Motor neuron (in vitro differentiated cells): ENCODE measurements at regions of chr6 and their contacts with region 1.

Region 1: GRCh38 chr6:70107852-70108629 is 194.8 kb downstream of the COL9A1 start:
- ATAC-seq: peak in 2 of 8 experiments; percentile 28 to 39
- H3K4me3 ChIP-seq: no peak overlapping the region
- H3K27ac ChIP-seq: no peak overlapping the region
- H3K4me1 ChIP-seq: peaks cover 0 to 21% of the 10 kb centered on the region in 2 donors

Region 2: GRCh38 chr6:68634726-68635411 is 1473.2 kb before region 1 on chr6 and contains the start of gene ADGRB3:
- in situ Hi-C with region 1: loop called in 3 of 9 experiments (anchors 25 kb)
- ATAC-seq: peak; percentile 83 to 92 (median 90)
- H3K4me3 ChIP-seq: peak within 1 kb of the TSS; percentile 46 to 63 (median 56)
- H3K27ac ChIP-seq: peak within 1 kb of the TSS; percentile 76 to 79
- H3K4me1 ChIP-seq: peaks cover 8 to 20% of the 10 kb centered on the region in 2 donors
- total RNA-seq, gene ADGRB3: 0.05 to 48.0 (median 24.2) TPM

Region 3: GRCh38 chr6:69732640-69733039 is 375.4 kb before region 1 on chr6:
- in situ Hi-C with region 1: loop called in 2 of 9 experiments (anchors 25 kb)
- ATAC-seq: no peak
- H3K4me3 ChIP-seq: no peak overlapping the region
- H3K27ac ChIP-seq: no peak overlapping the region
- H3K4me1 ChIP-seq: no peaks in the 10 kb centered on the region

Region 4: DNA sequence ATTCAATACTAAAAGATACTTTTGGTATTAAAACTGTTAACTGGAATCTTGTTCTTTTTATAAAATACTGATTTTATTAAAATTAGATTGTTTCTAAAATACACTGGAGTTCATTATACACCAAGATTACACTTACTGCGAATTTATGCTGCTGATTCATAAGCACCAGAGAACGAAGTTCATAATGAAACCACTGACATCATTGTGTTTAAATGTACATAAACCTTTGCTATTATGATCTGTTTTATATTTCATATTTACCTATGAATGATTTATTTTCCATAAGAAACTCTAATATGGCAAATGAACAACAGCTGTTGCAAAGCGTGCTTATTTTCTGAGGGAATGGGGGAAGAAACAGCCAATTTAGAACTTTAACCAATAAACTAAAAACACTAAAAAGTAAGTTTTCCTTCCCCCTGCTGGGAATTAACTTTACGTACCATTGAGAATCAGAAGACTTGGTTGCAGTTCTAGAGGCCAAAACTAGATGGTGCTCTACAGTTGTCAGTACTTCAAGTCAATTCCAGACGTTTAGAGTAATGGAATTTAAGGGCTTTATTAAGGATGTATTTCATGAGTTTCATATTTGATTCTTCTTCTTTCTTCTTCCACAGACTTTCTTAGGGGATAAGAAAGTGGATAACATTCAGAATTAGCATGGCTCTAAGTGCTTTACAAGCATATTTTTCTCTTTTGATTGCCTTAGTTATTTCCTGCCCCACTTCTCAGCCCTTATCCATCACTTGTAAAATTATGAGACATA is 272.4 kb before region 1 on chr6:
- in situ Hi-C with region 1: loop called in 3 of 9 experiments (anchors 25 kb)
- ATAC-seq: peak in 3 of 8 experiments; percentile 77 to 90 (median 82)
- H3K4me3 ChIP-seq: no peak overlapping the region
- H3K27ac ChIP-seq: no peak overlapping the region
- H3K4me1 ChIP-seq: no peaks in the 10 kb centered on the region